Left colon (tissue), 2 donors: ENCODE measurements at regions of chr13 and their contacts with region 1.

Region 1: DNA sequence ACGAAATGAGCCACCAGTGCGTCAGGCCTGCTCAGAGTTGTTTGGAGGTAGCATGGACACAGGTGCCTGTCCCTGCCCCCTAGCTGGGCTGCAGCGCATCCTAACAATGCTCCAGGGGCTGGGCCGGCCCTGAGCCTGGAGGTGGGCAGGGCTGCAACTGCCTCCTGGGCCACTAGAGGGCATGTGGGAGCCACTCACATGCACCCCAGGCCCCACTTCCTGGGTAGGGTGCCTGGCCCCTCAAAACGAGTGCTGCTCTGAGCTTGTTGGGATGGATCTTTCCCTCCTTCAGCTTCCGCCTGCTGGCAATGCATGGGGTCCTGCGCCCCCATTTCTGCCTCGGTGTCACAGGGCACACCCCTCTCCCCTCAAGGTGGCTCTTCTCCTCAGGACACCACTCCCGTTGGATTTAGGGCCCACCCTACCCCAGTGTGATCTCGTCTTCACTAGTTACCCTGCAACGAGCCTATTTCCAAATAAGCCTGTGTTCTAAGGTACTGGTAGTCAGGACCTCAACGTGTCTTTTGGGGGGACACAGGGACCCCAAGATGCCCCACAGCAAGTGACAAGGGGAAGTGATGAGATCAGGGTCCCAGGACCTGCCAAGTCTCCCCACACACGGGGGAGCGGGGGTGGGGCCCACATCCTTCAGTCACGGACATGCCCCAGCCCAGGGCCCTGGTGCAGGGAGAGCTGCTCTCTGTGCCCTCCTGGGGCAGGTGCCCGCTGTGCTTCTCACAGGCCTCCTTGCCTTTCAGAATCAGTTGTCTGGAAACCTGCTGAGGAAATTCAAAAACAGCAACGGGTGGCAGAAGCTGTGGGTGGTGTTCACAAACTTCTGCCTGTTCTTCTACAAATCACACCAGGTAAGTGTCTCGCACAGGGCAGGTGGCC is 131.3 kb downstream of the STK24 start:
- DNase-seq: peak; percentile 51 to 83
- ATAC-seq: peak; percentile 78

Region 2: DNA sequence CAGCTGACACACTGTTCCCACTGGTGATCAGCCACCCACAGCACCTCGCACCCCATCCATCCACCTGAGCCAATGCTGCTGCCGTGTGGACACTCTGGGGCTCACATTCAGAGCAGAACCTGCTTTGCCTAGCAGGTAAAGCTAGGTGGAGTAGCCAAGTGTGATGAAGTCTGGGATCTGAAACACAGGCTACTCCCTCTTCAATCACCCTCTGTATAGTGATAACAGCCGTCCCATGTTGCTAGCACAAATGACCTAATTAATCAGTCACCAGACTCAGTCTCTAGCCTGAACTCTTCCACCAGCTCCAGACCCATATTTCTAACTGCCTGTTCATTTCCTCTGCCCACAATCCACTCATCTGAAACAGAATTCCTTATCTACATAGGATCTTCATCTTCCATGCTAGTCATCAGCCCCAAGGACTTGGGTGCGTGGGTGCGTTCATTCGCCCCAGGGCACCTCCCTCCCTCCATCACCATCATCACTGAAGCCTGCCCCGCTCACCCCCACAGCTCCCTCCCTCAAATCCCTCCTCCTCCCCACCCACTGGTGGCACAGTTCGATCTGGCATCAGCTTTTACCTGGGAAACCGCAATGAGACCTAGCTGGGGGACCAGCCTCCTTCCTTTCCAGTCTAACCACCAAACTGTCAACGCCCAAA is 111.5 kb after region 1 on chr13:
- intact Hi-C with region 1: no loop called
- DNase-seq: no peak
- ATAC-seq: peak; percentile 69

Region 3: GRCh38 chr13:98653463-98653985 is 207.9 kb after region 1 on chr13:
- intact Hi-C with region 1: loop called in 1 of 2 experiments (anchors 5 kb)
- DNase-seq: peak; percentile 85 to 90
- ATAC-seq: peak; percentile 56